Right cardiac atrium (tissue), 5 donors: ENCODE measurements at regions of chr7 and their contacts with region 1.

Region 1: DNA sequence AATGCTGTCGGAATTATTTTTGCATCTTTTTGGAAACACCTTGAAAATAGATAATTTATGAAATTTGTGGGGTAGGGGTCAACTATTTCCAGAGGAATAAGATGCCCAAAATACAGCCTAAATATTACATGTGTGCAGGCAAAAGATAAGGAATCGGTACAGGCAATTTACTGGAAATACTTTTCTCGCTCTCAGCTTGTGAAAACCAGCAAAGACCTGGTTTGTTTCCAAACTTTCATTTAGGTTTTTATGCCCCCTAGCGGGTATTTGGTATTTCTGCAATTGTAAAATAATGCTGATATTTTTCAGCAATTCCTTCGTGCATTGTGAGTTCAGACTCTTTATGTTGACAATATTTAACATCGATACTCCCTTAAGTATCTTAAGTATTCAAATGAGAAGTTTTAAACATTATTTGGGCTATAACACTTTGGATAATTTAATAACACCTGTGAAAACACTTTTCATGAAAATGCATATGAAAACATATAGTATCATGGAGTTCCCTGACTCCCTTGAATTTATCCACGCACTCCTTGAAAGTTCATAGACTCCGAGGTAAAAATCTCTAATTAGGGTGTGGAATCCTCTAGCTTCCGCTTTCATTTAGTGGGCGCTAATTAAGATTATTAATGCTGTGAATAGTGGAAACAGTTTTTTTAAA is 132.4 kb downstream of the TSPAN12 start:
- DNase-seq: no peak
- ATAC-seq: no peak
- H3K4me3 ChIP-seq: no peak overlapping the region
- H3K27ac ChIP-seq: no peak overlapping the region
- H3K4me1 ChIP-seq: no peaks in the 10 kb centered on the region
- H3K27me3 ChIP-seq: no peaks in the 10 kb centered on the region

Region 2: DNA sequence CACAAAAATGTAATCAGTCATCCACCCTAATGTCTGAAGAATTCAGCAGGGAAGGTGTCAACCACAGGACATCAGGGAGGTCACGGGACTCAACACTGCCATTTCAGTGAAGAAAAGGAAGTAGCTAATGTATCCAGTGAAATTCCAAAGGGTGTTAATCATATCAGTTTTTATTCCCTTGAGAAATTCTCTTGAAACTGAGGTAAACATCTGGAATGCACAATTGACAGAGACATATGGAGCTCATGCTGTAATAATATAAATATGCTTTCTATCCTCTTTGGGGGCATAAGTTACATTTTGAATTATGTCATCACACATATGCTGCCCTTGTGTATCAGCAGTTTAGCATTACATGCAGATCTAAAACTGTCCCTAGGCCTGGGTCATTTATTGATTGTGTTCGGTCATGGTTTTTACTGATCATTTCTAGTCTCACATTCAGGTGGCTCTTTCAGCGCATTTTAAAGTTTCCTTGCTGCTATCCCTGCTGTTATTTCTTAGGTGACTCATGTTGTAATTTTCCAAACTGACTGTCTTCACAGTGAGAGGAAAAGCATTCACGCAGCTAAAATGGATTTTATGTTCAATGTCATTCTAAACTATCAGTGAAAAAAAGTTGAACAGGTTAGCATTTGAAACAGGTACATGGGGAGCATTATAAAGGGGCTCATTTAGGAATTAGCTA is 141.5 kb before region 1 on chr7:
- intact Hi-C with region 1: no loop called
- DNase-seq: no peak
- ATAC-seq: no peak
- H3K4me3 ChIP-seq: no peak overlapping the region
- H3K27ac ChIP-seq: no peak overlapping the region
- H3K4me1 ChIP-seq: no peaks in the 10 kb centered on the region
- H3K27me3 ChIP-seq: no peaks in the 10 kb centered on the region

Region 3: DNA sequence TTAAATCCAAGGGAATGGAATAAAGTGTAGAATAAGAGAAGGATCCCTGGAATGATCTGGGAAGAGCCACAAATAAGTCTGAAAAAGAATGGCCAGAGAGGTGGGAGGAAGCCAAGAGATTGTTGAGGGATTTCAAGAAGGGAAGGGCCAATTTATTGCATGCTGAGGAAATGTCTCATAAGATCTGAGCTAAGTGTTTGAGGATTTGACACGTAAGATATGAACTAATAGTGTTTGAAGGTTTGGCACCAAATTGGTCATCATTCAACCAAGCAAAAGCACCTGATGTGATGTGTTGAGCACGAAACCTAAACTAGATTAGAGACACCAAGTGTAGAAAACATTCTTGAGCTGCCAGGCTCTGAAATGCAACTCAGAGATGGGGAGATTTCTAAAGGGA is 34.5 kb after region 1 on chr7:
- intact Hi-C with region 1: no loop called
- DNase-seq: no peak
- ATAC-seq: no peak
- H3K4me3 ChIP-seq: no peak overlapping the region
- H3K27ac ChIP-seq: no peak overlapping the region
- H3K4me1 ChIP-seq: no peaks in the 10 kb centered on the region
- H3K27me3 ChIP-seq: no peaks in the 10 kb centered on the region

Region 4: GRCh38 chr7:120916121-120916520 is 190.6 kb after region 1 on chr7:
- intact Hi-C with region 1: loop called in 1 of 4 experiments (anchors 10 kb)
- DNase-seq: no peak
- ATAC-seq: no peak
- H3K4me3 ChIP-seq: no peak overlapping the region
- H3K27ac ChIP-seq: no peak overlapping the region
- H3K4me1 ChIP-seq: no peaks in the 10 kb centered on the region
- H3K27me3 ChIP-seq: no peaks in the 10 kb centered on the region

Region 5: DNA sequence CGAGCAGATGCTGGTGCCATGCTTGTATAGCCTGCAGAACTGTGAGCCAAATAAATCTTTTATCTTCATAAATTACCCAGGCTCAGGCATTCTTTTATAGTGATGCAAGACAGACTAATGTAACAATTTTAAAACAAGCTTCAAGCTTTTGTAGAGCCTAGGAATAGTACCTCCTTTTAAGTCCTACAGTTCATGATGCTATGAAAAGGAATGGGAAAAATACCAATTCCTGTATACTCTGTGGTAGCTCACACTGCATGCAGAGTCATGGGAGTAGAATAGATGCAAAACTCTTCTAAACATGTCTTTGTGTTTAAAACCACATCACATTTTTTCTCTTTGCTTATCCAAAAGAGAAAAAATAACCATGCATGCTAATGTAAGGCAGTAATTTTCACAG is 536.7 kb after region 1 on chr7:
- intact Hi-C with region 1: no loop called
- DNase-seq: no peak
- ATAC-seq: no peak
- H3K4me3 ChIP-seq: no peak overlapping the region
- H3K27ac ChIP-seq: no peak overlapping the region
- H3K4me1 ChIP-seq: no peaks in the 10 kb centered on the region
- H3K27me3 ChIP-seq: no peaks in the 10 kb centered on the region